Mammary epithelial cell (primary cell): ENCODE measurements at regions of chr9 and their contacts with region 1.

Region 1: GRCh38 chr9:132994410-132995120 is 16.1 kb downstream of the GFI1B start:
- DNase-seq: peak; percentile 92
- H3K4me3 ChIP-seq: no peak overlapping the region
- H3K27ac ChIP-seq: no peak overlapping the region
- H3K4me1 ChIP-seq: peaks cover 15% of the 10 kb centered on the region
- H3K27me3 ChIP-seq: no peaks in the 10 kb centered on the region
- CTCF ChIP-seq: no peak

Region 2: GRCh38 chr9:132937463-132937901 is 57.1 kb before region 1 on chr9:
- CTCF ChIA-PET with region 1: no interaction called
- dilution Hi-C with region 1: loop called (anchors 5 kb)
- in situ Hi-C with region 1: no loop called
- intact Hi-C with region 1: no loop called
- DNase-seq: no peak
- H3K4me3 ChIP-seq: no peak overlapping the region
- H3K27ac ChIP-seq: no peak overlapping the region
- H3K4me1 ChIP-seq: peaks cover 3% of the 10 kb centered on the region
- H3K27me3 ChIP-seq: no peaks in the 10 kb centered on the region
- CTCF ChIP-seq: no peak

Region 3: DNA sequence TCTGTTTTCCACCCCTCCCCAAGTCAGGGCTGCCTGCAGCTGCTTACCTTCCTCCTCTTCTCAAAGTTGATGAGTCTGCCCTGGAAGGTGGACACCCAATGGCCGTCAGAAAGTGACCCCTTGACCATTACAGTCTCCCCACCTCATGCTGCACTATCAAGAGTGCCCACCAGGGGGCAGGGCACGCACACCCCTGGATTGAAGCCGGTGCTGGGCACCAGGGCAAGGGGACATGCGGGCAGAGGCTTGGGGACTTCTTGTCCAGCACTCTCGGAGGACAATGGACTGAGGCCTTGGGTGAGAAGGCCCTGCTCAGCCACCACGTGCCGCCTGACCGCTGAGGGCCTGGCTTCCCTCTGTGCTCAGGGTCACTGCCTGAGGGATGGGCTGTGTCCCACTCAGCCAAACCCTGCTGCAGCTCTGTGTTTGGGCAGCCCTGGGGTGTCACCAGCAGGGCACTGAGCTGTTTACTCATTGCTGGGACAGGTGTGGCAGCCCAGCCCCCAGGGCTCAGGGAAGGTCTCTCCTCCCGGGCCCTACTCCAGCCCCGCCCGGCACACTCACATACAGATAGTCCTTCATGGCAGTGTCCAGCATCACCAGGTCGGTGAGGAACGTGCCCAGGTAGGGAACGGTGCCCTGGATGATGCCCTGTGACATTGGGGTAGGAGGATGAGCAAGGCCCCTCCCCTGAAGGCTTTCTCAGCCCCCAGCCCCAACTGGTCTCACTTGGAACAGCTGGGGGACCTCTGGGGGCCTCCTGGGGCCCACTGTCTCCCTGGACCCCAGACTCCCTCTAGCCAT is 108.8 kb after region 1 on chr9:
- CTCF ChIA-PET with region 1: no interaction called
- dilution Hi-C with region 1: no loop called
- in situ Hi-C with region 1: no loop called
- intact Hi-C with region 1: no loop called
- DNase-seq: no peak
- H3K4me3 ChIP-seq: no peak overlapping the region
- H3K27ac ChIP-seq: no peak overlapping the region
- H3K4me1 ChIP-seq: no peaks in the 10 kb centered on the region
- H3K27me3 ChIP-seq: no peaks in the 10 kb centered on the region
- CTCF ChIP-seq: peak; percentile 93 to 94

Region 4: GRCh38 chr9:133371261-133371711 is 376.7 kb after region 1 on chr9:
- CTCF ChIA-PET with region 1: no interaction called
- dilution Hi-C with region 1: no loop called
- in situ Hi-C with region 1: no loop called
- intact Hi-C with region 1: no loop called
- DNase-seq: no peak
- H3K4me3 ChIP-seq: no peak overlapping the region
- H3K27ac ChIP-seq: no peak overlapping the region
- H3K4me1 ChIP-seq: peaks cover 30% of the 10 kb centered on the region
- H3K27me3 ChIP-seq: no peaks in the 10 kb centered on the region
- CTCF ChIP-seq: no peak

Region 5: GRCh38 chr9:134010310-134011173 is 1016.0 kb after region 1 on chr9:
- CTCF ChIA-PET with region 1: no interaction called
- dilution Hi-C with region 1: no loop called
- in situ Hi-C with region 1: no loop called
- intact Hi-C with region 1: no loop called
- DNase-seq: no peak
- H3K4me3 ChIP-seq: no peak overlapping the region
- H3K27ac ChIP-seq: no peak overlapping the region
- H3K4me1 ChIP-seq: no peaks in the 10 kb centered on the region
- H3K27me3 ChIP-seq: no peaks in the 10 kb centered on the region
- CTCF ChIP-seq: no peak